ENCODE measurements at regions of chrX and their contacts with region 1.

Region 1: DNA sequence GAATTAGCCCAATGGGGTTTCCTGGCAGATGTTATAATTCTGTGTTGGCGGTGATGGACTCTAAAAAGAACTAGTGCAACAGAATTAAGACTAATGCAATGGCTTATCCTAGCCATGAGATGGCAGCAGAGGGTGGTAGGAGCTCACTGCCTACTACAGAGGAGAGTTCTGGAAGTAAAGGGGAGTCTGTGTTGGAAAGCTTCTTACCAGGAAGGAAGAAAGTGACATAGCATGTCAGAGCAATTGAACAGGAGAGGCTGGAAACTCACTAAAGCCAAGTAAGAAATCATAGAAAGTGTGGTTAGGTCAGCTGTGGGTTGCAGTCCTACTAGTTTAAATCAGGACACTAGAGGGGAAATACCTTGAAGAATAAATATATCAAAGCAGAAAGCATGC is 6.3 kb upstream of the TRPC5OS start:
- DNase-seq: no peak
- ATAC-seq: peak; percentile 68
- H3K4me3 ChIP-seq: no peak overlapping the region
- H3K27ac ChIP-seq: no peak overlapping the region
- H3K4me1 ChIP-seq: no peaks in the 10 kb centered on the region
- H3K27me3 ChIP-seq: no peaks in the 10 kb centered on the region
- CTCF ChIP-seq: peak; percentile 59
- EP300 ChIP-seq: no peak
- POLR2A ChIP-seq: no peak
- RAD21 ChIP-seq: no peak

Region 2: GRCh38 chrX:112043997-112044396 is 174.4 kb after region 1 on chrX:
- CTCF ChIA-PET with region 1: no interaction called
- POLR2A ChIA-PET with region 1: no interaction called
- in situ Hi-C with region 1: no loop called
- intact Hi-C with region 1: loop called (anchors 10 kb)
- DNase-seq: no peak
- ATAC-seq: no peak
- H3K4me3 ChIP-seq: no peak overlapping the region
- H3K27ac ChIP-seq: no peak overlapping the region
- H3K4me1 ChIP-seq: no peaks in the 10 kb centered on the region
- H3K27me3 ChIP-seq: no peaks in the 10 kb centered on the region
- CTCF ChIP-seq: no peak
- EP300 ChIP-seq: no peak
- POLR2A ChIP-seq: no peak
- RAD21 ChIP-seq: no peak